Endothelial cell of umbilical vein (primary cell): ENCODE measurements at regions of chr6 and their contacts with region 1.

Region 1: GRCh38 chr6:73558624-73559398 is 38.0 kb upstream of the EEF1A1 start:
- DNase-seq: no peak
- H3K4me3 ChIP-seq: no peak overlapping the region
- H3K27ac ChIP-seq: no peak overlapping the region
- H3K4me1 ChIP-seq: peaks cover 3% of the 10 kb centered on the region
- H3K27me3 ChIP-seq: no peaks in the 10 kb centered on the region
- CTCF ChIP-seq: no peak
- POLR2A ChIP-seq: no peak

Region 2: DNA sequence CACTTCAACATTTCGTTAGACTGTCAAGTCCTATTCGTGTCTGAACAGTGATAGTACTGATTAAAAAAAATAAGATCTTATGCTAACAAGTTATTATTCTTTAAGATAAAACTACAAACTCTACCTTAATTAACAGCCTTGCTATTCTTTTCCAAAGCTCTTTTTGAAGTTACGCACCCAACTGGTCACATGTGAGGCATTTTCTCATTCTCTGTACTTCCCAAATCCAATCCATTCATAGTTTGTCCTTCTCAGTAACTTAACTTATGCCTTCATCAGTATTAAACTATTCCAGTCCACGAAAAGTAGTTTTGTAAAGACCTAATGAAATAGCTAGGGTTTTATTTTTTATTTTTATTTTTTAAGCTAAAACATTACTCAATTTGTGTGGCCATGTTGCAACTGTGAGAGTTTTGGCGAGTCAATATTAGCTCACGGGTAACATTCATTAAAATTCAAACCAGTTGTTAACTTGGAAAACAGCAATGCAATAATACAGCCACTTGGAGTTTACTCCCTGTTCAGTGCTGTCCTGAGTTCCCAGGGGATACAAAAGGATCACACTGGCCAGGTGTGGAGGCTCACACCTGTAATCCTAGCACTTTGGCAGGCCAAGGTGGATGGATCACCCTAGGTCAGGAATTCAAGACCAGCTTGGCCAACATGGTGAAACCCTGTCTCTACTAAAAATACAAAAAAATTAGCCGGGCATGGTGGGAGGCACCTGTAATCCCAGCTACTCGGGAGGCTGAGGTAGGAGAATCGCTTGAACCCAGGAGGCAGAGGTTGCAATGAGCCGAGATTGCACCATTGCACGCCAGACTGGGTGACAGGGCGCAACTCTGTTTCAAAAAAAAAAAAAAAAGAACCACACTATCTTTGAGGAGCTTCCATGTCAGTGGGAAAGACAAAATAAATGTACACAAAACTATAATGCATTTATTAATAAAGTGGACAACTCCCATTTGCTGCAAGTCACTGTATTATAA is 10.1 kb before region 1 on chr6:
- CTCF ChIA-PET with region 1: interaction called, 11 read pairs
- POLR2A ChIA-PET with region 1: no interaction called
- dilution Hi-C with region 1: no loop called
- intact Hi-C with region 1: no loop called
- DNase-seq: no peak
- H3K4me3 ChIP-seq: no peak overlapping the region
- H3K27ac ChIP-seq: no peak overlapping the region
- H3K4me1 ChIP-seq: no peaks in the 10 kb centered on the region
- H3K27me3 ChIP-seq: no peaks in the 10 kb centered on the region
- CTCF ChIP-seq: no peak
- POLR2A ChIP-seq: no peak

Region 3: GRCh38 chr6:73722318-73723060 is 163.7 kb after region 1 on chr6:
- CTCF ChIA-PET with region 1: no interaction called
- POLR2A ChIA-PET with region 1: no interaction called
- dilution Hi-C with region 1: no loop called
- intact Hi-C with region 1: no loop called
- DNase-seq: peak; percentile 91
- H3K4me3 ChIP-seq: no peak overlapping the region
- H3K27ac ChIP-seq: peak overlapping the region; percentile 96
- H3K4me1 ChIP-seq: peaks cover 18% of the 10 kb centered on the region
- H3K27me3 ChIP-seq: no peaks in the 10 kb centered on the region
- CTCF ChIP-seq: no peak
- POLR2A ChIP-seq: no peak

Region 4: DNA sequence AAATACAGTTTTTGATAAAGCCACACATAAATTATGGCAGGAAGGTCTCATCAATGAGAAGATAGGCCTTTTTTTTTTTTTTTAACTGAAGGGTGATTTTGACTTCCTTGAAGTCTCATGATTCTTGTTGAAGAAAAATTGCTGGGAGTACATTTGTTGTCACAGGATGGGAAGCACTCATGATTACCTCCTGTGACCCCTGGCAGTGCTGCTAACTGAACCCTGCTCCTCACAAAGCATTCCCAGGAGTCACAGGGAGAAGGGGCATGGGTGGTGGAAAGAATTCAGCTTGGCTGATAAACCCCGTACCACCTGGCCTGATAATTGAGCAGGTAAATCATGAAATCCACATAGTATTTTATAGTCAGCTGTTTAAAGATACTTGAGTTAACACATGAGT is 224.1 kb after region 1 on chr6:
- CTCF ChIA-PET with region 1: no interaction called
- POLR2A ChIA-PET with region 1: no interaction called
- dilution Hi-C with region 1: no loop called
- intact Hi-C with region 1: no loop called
- DNase-seq: no peak
- H3K4me3 ChIP-seq: no peak overlapping the region
- H3K27ac ChIP-seq: no peak overlapping the region
- H3K4me1 ChIP-seq: no peaks in the 10 kb centered on the region
- H3K27me3 ChIP-seq: no peaks in the 10 kb centered on the region
- CTCF ChIP-seq: no peak
- POLR2A ChIP-seq: no peak